ENCODE measurements at regions of chr9 and their contacts with region 1.

Region 1: DNA sequence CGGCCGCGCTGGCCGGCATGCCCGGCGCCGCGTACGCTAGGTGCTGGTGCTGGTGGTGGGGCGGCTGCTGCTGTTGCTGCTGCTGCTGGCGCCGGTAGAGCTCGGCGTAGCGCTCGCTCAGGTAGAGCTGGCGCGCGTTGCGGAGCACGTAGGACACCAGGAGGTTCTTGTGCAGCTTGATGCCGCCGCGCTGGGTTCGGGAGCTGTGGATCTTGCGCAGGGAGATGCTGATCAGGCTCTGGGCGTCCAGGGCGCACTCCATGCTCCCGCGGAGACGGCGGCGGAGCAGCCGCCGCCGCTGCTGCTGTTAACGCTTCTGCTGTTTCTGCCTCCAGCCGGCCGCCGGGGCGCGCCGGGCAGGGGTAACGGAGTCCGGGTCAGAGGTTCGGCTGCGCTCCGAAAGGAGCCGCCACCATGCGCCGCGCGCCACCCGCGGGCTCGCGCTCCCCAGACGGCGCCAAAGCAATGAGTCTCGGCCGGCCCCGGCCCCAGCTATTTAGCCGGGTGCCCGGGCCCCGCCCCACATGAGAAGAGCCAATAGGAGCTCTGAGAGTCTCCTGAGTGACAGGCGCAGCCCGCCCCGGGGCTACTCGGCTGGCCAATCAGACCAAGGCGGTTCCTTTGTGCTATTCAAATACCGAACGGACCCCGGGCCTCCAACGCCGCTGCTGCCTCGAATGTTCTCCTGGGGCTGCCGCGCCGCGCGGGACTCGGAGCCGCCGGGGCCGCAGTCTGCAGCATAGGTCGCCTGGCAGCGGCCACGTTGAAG is at the start of gene IER5L:
- DNase-seq: peak; percentile 93 to 99 (median 98)

Region 2: GRCh38 chr9:129320575-129321263 is 142.7 kb after region 1 on chr9:
- intact Hi-C with region 1: loop called (anchors 10 kb)
- DNase-seq: peak; percentile 46 to 92 (median 78)

Region 3: DNA sequence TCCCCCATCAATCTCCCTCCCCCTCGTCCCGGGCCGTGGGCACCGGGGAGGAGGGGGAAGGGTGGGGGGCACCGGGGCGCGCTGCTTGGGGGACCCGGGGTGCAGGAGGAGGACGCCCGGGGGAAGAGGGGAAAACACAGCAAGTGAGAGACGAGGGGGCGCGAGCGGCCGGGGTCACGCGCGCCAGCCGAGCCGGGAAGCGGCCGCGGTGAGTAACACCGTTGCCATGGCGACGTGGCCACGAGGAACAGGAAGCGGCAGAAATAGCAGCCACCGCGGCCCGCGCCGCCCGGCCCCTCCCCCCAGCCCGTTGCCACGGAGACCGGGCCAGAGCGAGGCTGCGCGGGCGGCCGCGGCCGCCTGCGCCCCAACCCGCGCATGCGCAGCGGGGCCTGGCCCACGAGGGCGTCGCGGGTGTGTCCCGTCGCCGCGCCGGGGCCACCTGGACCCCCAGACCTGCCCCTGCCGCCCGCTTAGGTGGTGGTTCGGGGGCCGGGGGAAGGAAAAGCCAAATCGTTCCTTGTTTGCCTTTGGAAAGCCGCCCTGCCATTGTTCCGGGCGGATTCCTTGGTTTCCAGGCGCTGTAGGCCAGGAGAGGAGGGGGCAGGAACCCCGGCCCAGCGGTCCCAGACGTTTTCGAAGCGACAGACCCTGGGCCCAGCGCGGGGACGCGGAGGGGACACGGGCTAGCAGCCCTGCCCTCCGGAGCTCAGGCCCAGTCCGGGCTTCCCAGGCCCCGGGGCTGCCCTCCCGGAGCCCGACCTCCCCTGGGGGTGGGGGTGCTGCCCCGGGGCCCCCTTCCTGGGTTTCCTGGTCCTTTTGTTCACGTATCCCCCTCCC is 235.8 kb after region 1 on chr9:
- intact Hi-C with region 1: loop called (anchors 10 kb)
- DNase-seq: peak; percentile 96 to 100 (median 99)

Region 4: GRCh38 chr9:129610473-129611301 is 432.7 kb after region 1 on chr9:
- intact Hi-C with region 1: loop called (anchors 2 kb)
- DNase-seq: peak; percentile 65 to 89 (median 80)

Measured in head of caudate nucleus (tissue), 42 donors.